Activated T-helper 1 cell treated with anti-CD3 and anti-CD28 coated beads, Interleukin-12 subunit alpha, Interleukin-12 subunit beta, Interleukin-2, Interleukin-4 antibody, amounts not matched to agents 30 ng/mL and 10 ng/mL and 1 ng/mL, durations not matched to agents 14 hours and 24 hours and 36 hours (primary cell): ENCODE measurements at regions of chr16 and their contacts with region 1.

Region 1: GRCh38 chr16:67350324-67350723 is 23.7 kb downstream of the LRRC36 start:
- DNase-seq: no peak
- H3K4me3 Mint-ChIP-seq: no peak overlapping the region
- H3K27ac Mint-ChIP-seq: no peak overlapping the region
- H3K4me1 Mint-ChIP-seq: no peaks in the 10 kb centered on the region
- H3K27me3 Mint-ChIP-seq: peaks cover 16% of the 10 kb centered on the region

Region 2: DNA sequence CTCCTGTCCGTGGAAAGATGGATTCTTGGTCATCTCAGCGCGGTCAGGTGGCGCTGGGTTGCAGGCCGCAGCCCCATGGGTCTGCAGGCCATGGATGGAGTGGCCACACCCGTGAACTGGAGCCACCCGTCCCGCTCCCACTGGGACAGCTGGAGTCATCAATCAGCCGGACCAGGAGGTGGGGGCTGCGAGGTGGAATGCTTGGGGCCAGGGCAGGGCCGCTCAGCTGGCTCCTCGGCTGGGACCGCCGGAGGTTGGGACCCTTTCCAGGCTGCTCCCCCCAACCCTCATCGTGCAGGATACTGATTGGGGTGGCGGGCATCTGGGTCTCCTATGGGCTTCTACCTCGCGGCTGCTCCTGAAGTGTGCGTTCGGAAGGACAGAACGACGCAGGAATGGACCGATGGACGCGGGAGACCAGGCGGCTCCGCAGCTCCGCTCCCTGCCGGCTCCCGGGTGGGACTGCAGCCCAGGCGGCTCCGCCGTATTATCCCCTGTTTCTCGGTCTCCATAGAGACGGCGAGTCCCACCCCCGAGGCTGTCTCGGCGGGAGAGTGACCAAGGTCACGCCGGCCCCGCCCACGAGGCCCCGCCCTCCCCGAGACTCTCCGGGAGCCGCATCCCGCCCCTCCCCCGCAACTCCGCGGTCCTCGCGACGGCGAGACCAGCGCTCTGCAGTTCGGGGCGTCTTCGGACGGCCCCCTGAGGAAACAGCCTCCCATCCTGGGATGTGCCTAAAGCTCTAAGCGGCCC is 42.9 kb after region 1 on chr16 and contains the start of gene TPPP3:
- intact Hi-C with region 1: loop called (anchors 5 kb)
- DNase-seq: peak; percentile 24
- H3K4me3 Mint-ChIP-seq: no peak within 1 kb of the TSS
- H3K27ac Mint-ChIP-seq: peak within 1 kb of the TSS; percentile 48
- H3K4me1 Mint-ChIP-seq: peaks cover 6% of the 10 kb centered on the region
- H3K27me3 Mint-ChIP-seq: peaks cover 33% of the 10 kb centered on the region
- total RNA-seq, gene TPPP3: not detected in 2 replicates